ENCODE measurements at regions of chr2 and their contacts with region 1.

Region 1: GRCh38 chr2:180980106-180980942 is at the start of gene UBE2E3:
- DNase-seq: peak; percentile 64 to 80 (median 78)
- H3K4me3 ChIP-seq: peak within 1 kb of the TSS; percentile 75 to 95 (median 79)
- H3K4me3 Mint-ChIP-seq: peak within 1 kb of the TSS; percentile 98 to 99
- H3K27ac ChIP-seq: peak within 1 kb of the TSS; percentile 44 to 63
- H3K27ac Mint-ChIP-seq: peak within 1 kb of the TSS; percentile 83 to 97 (median 93)
- H3K4me1 ChIP-seq: peaks cover 22 to 38% of the 10 kb centered on the region in 2 donors
- H3K4me1 Mint-ChIP-seq: peaks cover 36% of the 10 kb centered on the region
- H3K27me3 ChIP-seq: peaks cover 5 to 7% of the 10 kb centered on the region in 2 donors
- H3K27me3 Mint-ChIP-seq: peaks cover 0 to 18% (median 6%) of the 10 kb centered on the region in 3 donors
- CTCF ChIP-seq: peak; percentile 52
- polyA plus RNA-seq, gene UBE2E3: 45.9 to 67.5 (median 52.1) TPM

Region 2: DNA sequence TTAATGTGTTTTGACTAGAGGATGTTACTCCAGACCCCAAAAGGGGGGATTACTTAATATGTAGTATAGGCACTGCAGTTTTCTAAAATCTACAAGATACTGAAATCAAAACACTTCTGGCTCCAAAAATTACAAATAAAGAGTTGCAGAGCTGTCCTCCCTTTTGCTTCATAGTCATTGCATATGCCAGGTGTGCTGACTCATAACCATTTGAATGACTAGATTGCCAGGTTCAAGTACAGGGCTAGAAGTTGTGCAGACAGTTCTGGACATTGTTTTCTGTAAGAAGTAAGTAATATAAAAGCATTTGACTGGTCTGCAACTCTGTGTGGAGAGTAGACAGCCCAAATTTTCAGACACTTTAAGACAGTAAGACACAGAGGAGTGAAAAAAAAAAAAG is 979.9 kb before region 1 on chr2:
- intact Hi-C with region 1: loop called (anchors 5 to 10 kb)
- DNase-seq: no peak
- H3K4me3 ChIP-seq: no peak overlapping the region
- H3K4me3 Mint-ChIP-seq: no peak overlapping the region
- H3K27ac ChIP-seq: no peak overlapping the region
- H3K27ac Mint-ChIP-seq: no peak overlapping the region
- H3K4me1 ChIP-seq: peaks cover 34 to 38% of the 10 kb centered on the region in 2 donors
- H3K4me1 Mint-ChIP-seq: peaks cover 45% of the 10 kb centered on the region
- H3K27me3 ChIP-seq: no peaks in the 10 kb centered on the region
- H3K27me3 Mint-ChIP-seq: peaks cover 0 to 1% (median 0%) of the 10 kb centered on the region in 3 donors
- CTCF ChIP-seq: no peak

Region 3: GRCh38 chr2:180006781-180007579 is 973.3 kb before region 1 on chr2 and contains the start of gene CWC22:
- intact Hi-C with region 1: loop called (anchors 5 to 10 kb)
- DNase-seq: peak; percentile 90 to 94 (median 92)
- H3K4me3 ChIP-seq: peak within 1 kb of the TSS; percentile 81 to 94 (median 82)
- H3K4me3 Mint-ChIP-seq: peak within 1 kb of the TSS; percentile 90 to 94
- H3K27ac ChIP-seq: peak within 1 kb of the TSS; percentile 84 to 99
- H3K27ac Mint-ChIP-seq: peak within 1 kb of the TSS; percentile 98 to 100 (median 100)
- H3K4me1 ChIP-seq: peaks cover 41 to 42% of the 10 kb centered on the region in 2 donors
- H3K4me1 Mint-ChIP-seq: peaks cover 52% of the 10 kb centered on the region
- H3K27me3 ChIP-seq: no peaks in the 10 kb centered on the region
- H3K27me3 Mint-ChIP-seq: peaks cover 0 to 2% (median 0%) of the 10 kb centered on the region in 3 donors
- CTCF ChIP-seq: no peak
- polyA plus RNA-seq, gene CWC22: 4.4 to 14.9 (median 9.5) TPM

Region 4: GRCh38 chr2:181025004-181025403 is 44.7 kb after region 1 on chr2:
- intact Hi-C with region 1: no loop called
- DNase-seq: no peak
- H3K4me3 ChIP-seq: no peak overlapping the region
- H3K4me3 Mint-ChIP-seq: no peak overlapping the region
- H3K27ac ChIP-seq: no peak overlapping the region
- H3K27ac Mint-ChIP-seq: no peak overlapping the region
- H3K4me1 ChIP-seq: no peaks in the 10 kb centered on the region
- H3K4me1 Mint-ChIP-seq: no peaks in the 10 kb centered on the region
- H3K27me3 ChIP-seq: no peaks in the 10 kb centered on the region
- H3K27me3 Mint-ChIP-seq: no peaks in the 10 kb centered on the region
- CTCF ChIP-seq: no peak

Region 5: GRCh38 chr2:181143790-181144300 is 163.5 kb after region 1 on chr2:
- intact Hi-C with region 1: no loop called
- DNase-seq: no peak
- H3K4me3 ChIP-seq: no peak overlapping the region
- H3K4me3 Mint-ChIP-seq: no peak overlapping the region
- H3K27ac ChIP-seq: no peak overlapping the region
- H3K27ac Mint-ChIP-seq: no peak overlapping the region
- H3K4me1 ChIP-seq: no peaks in the 10 kb centered on the region
- H3K4me1 Mint-ChIP-seq: peaks cover 3% of the 10 kb centered on the region
- H3K27me3 ChIP-seq: no peaks in the 10 kb centered on the region
- H3K27me3 Mint-ChIP-seq: no peaks in the 10 kb centered on the region
- CTCF ChIP-seq: no peak

Measured in CD14-positive monocyte (primary cell).